HEK293T (cell line): ENCODE measurements at regions of chr15 and their contacts with region 1.

Region 1: GRCh38 chr15:60745469-60746061 is 266.6 kb upstream of the ICE2 start:
- DNase-seq: no peak

Region 2: DNA sequence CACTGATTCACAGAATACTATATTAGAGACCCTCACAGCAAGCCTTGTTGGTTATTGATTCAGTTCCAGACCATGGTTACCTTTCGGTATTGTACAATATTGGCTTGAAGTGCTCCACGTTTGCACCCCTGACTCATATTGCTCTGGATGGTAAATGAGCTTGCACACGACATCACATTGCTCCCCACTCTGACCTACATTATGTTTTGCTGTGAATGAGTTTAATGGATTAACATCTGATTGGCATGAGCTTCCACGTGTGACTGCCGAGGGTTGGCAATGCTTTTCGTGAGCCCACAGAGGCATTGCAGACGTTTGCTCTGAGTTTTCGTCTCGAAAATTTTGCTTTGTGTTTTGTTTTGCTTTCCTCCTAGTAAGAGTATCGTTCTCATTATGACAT is 40.8 kb before region 1 on chr15:
- CTCF ChIA-PET with region 1: interaction called, 10 read pairs
- POLR2A ChIA-PET with region 1: no interaction called
- DNase-seq: no peak